ENCODE measurements at regions of chr22 and their contacts with region 1.

Region 1: GRCh38 chr22:39520054-39520891 is at the start of gene ATF4:
- DNase-seq: peak; percentile 88 to 98 (median 96)
- ATAC-seq: peak; percentile 92
- H3K4me3 ChIP-seq: peak within 1 kb of the TSS; percentile 96
- H3K4me3 Mint-ChIP-seq: peak within 1 kb of the TSS; percentile 83 to 99 (median 96)
- H3K27ac ChIP-seq: peak within 1 kb of the TSS; percentile 84
- H3K27ac Mint-ChIP-seq: peak within 1 kb of the TSS; percentile 94 to 100 (median 97)
- H3K4me1 ChIP-seq: peaks cover 27 to 39% of the 10 kb centered on the region in 2 donors
- H3K4me1 Mint-ChIP-seq: peaks cover 29 to 61% (median 48%) of the 10 kb centered on the region in 7 donors
- H3K27me3 ChIP-seq: no peaks in the 10 kb centered on the region
- H3K27me3 Mint-ChIP-seq: peaks cover 0 to 4% (median 0%) of the 10 kb centered on the region in 5 donors
- total RNA-seq, gene ATF4: 235 to 293 (median 244) TPM

Region 2: DNA sequence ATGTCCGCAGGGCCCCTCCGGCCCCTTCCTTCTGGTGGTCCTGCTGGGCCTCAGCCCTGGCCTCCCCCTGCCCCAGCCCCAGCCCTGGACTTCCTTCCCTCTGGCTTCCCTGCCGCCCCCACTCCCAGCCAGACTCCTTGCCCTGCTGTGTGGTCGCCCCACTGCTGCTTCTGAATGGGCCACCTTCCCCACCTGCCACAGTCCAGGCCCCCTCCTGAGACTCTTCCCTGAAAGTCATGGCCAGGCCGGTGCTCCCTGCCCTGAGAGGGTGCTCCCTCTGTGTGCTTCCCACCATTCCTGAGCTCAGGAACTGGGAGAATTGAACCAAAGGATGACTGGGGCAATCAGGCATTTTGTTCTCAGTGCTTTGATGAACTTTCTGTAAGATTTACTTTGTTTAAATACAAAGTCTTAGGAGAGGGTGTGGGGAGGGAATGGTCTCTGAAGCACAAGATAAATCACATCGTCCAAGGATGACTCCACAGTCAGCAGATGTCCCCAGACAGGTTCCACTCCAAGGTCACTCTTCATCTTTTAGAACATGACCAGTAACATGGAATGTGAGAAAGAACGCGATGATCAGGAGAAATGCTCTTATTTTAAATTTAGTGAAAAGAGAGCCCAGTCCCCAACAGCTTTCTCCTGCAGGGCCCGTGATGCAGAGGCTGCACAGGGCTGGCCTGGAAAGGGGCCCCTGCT is 498.6 kb before region 1 on chr22:
- CTCF ChIA-PET with region 1: no interaction called
- POLR2A ChIA-PET with region 1: no interaction called
- intact Hi-C with region 1: loop called in 1 of 2 experiments (anchors 10 kb)
- DNase-seq: peak in 1 of 9 donors; percentile 18
- ATAC-seq: no peak
- H3K4me3 ChIP-seq: peak overlapping the region; percentile 76
- H3K4me3 Mint-ChIP-seq: peak overlapping the region; percentile 91 to 98 (median 94)
- H3K27ac ChIP-seq: peak overlapping the region; percentile 86
- H3K27ac Mint-ChIP-seq: peak overlapping the region; percentile 88 to 98 (median 96)
- H3K4me1 ChIP-seq: peaks cover 18 to 24% of the 10 kb centered on the region in 2 donors
- H3K4me1 Mint-ChIP-seq: peaks cover 29 to 73% (median 54%) of the 10 kb centered on the region in 7 donors
- H3K27me3 ChIP-seq: no peaks in the 10 kb centered on the region
- H3K27me3 Mint-ChIP-seq: no peaks in the 10 kb centered on the region

Region 3: GRCh38 chr22:39236321-39237317 is 283.7 kb before region 1 on chr22:
- CTCF ChIA-PET with region 1: no interaction called
- POLR2A ChIA-PET with region 1: no interaction called
- intact Hi-C with region 1: loop called in 1 of 2 experiments (anchors 2 kb)
- DNase-seq: peak in 7 of 9 donors; percentile 27 to 55 (median 49)
- ATAC-seq: peak; percentile 52
- H3K4me3 ChIP-seq: peak overlapping the region; percentile 14
- H3K4me3 Mint-ChIP-seq: peak overlapping the region; percentile 67 to 84 (median 79)
- H3K27ac ChIP-seq: no peak overlapping the region
- H3K27ac Mint-ChIP-seq: peak overlapping the region in 6 of 9 donors; percentile 31 to 89 (median 65)
- H3K4me1 ChIP-seq: peaks cover 54 to 66% of the 10 kb centered on the region in 2 donors
- H3K4me1 Mint-ChIP-seq: peaks cover 43 to 75% (median 67%) of the 10 kb centered on the region in 7 donors
- H3K27me3 ChIP-seq: peaks cover 0 to 8% of the 10 kb centered on the region in 2 donors
- H3K27me3 Mint-ChIP-seq: peaks cover 0 to 80% (median 38%) of the 10 kb centered on the region in 5 donors

Region 4: GRCh38 chr22:39405346-39406085 is 114.8 kb before region 1 on chr22:
- CTCF ChIA-PET with region 1: interaction called, 3 read pairs
- POLR2A ChIA-PET with region 1: interaction called, 40 read pairs
- intact Hi-C with region 1: no loop called
- DNase-seq: peak in 1 of 9 donors; percentile 34
- ATAC-seq: peak; percentile 48
- H3K4me3 ChIP-seq: no peak overlapping the region
- H3K4me3 Mint-ChIP-seq: peak overlapping the region in 4 of 10 donors; percentile 9 to 55 (median 36)
- H3K27ac ChIP-seq: no peak overlapping the region
- H3K27ac Mint-ChIP-seq: peak overlapping the region in 4 of 9 donors; percentile 6 to 24 (median 10)
- H3K4me1 ChIP-seq: peaks cover under 1 to 13% of the 10 kb centered on the region in 2 donors
- H3K4me1 Mint-ChIP-seq: peaks cover 44 to 89% (median 76%) of the 10 kb centered on the region in 7 donors
- H3K27me3 ChIP-seq: no peaks in the 10 kb centered on the region
- H3K27me3 Mint-ChIP-seq: no peaks in the 10 kb centered on the region

Region 5: GRCh38 chr22:39490135-39490798 is 30.0 kb before region 1 on chr22:
- CTCF ChIA-PET with region 1: interaction called, 18 read pairs
- POLR2A ChIA-PET with region 1: interaction called, 7 read pairs
- intact Hi-C with region 1: no loop called
- DNase-seq: peak; percentile 43 to 83 (median 69)
- ATAC-seq: peak; percentile 97
- H3K4me3 ChIP-seq: no peak overlapping the region
- H3K4me3 Mint-ChIP-seq: peak overlapping the region in 1 of 10 donors; percentile 59
- H3K27ac ChIP-seq: no peak overlapping the region
- H3K27ac Mint-ChIP-seq: peak overlapping the region in 2 of 9 donors; percentile 82 to 88
- H3K4me1 ChIP-seq: no peaks in the 10 kb centered on the region
- H3K4me1 Mint-ChIP-seq: peaks cover 6 to 17% (median 14%) of the 10 kb centered on the region in 7 donors
- H3K27me3 ChIP-seq: no peaks in the 10 kb centered on the region
- H3K27me3 Mint-ChIP-seq: no peaks in the 10 kb centered on the region